Activated T-helper 1 cell treated with anti-CD3 and anti-CD28 coated beads, Interleukin-12 subunit alpha, Interleukin-12 subunit beta, Interleukin-2, Interleukin-4 antibody, amounts not matched to agents 30 ng/mL and 10 ng/mL and 1 ng/mL, durations not matched to agents 14 hours and 24 hours and 36 hours (primary cell): ENCODE measurements at regions of chr6 and their contacts with region 1.

Region 1: GRCh38 chr6:111210194-111210728 is 123.0 kb downstream of the SLC16A10 start:
- DNase-seq: no peak
- H3K4me3 Mint-ChIP-seq: no peak overlapping the region
- H3K27ac Mint-ChIP-seq: no peak overlapping the region
- H3K4me1 Mint-ChIP-seq: no peaks in the 10 kb centered on the region
- H3K27me3 Mint-ChIP-seq: peaks cover 4% of the 10 kb centered on the region

Region 2: GRCh38 chr6:110528101-110528929 is 681.9 kb before region 1 on chr6:
- intact Hi-C with region 1: loop called (anchors 1 kb)
- DNase-seq: peak; percentile 24
- H3K4me3 Mint-ChIP-seq: no peak overlapping the region
- H3K27ac Mint-ChIP-seq: no peak overlapping the region
- H3K4me1 Mint-ChIP-seq: peaks cover 9% of the 10 kb centered on the region
- H3K27me3 Mint-ChIP-seq: peaks cover 8% of the 10 kb centered on the region

Region 3: DNA sequence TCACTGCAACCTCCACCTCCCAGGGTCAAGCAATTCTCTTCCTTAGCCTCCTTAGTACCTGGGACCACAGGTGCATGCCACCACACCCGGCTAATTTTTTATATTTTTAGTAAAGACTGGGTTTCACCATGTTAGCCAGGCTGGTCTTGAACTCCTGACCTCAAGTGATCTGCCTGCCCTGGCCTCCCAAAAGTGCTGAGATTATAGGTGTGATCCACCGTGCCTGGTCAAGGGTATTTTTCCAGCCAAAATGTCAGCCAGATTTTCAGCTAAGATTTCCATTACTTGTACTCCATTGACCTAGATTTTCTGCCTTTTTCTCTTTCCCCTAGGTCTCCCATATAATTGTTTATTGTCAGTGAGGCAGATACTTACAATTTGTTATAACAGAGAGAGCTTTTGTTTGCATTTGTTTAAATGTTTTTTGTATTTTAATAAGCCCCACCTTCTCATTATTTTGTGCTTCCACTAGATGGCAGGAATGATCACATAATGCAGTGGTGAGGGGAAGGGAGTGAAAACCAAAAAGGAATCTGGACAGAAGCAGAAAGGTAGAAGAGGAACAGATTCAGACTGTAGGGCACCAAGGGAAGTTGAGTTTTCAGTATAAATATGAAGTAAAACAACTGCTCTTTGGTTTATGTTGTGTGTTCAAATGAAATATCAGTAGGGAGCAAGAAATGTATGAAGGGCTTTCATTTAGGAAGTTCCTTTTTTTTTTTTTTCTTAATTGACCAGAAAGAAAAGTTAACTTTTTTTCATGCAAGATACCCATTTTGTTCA is 198.7 kb before region 1 on chr6:
- intact Hi-C with region 1: loop called (anchors 1 kb)
- DNase-seq: no peak
- H3K4me3 Mint-ChIP-seq: no peak overlapping the region
- H3K27ac Mint-ChIP-seq: no peak overlapping the region
- H3K4me1 Mint-ChIP-seq: peaks cover 6% of the 10 kb centered on the region
- H3K27me3 Mint-ChIP-seq: no peaks in the 10 kb centered on the region

Region 4: GRCh38 chr6:111057074-111057752 is 153.0 kb before region 1 on chr6:
- intact Hi-C with region 1: loop called (anchors 1 kb)
- DNase-seq: no peak
- H3K4me3 Mint-ChIP-seq: no peak overlapping the region
- H3K27ac Mint-ChIP-seq: no peak overlapping the region
- H3K4me1 Mint-ChIP-seq: no peaks in the 10 kb centered on the region
- H3K27me3 Mint-ChIP-seq: peaks cover 3% of the 10 kb centered on the region

Region 5: DNA sequence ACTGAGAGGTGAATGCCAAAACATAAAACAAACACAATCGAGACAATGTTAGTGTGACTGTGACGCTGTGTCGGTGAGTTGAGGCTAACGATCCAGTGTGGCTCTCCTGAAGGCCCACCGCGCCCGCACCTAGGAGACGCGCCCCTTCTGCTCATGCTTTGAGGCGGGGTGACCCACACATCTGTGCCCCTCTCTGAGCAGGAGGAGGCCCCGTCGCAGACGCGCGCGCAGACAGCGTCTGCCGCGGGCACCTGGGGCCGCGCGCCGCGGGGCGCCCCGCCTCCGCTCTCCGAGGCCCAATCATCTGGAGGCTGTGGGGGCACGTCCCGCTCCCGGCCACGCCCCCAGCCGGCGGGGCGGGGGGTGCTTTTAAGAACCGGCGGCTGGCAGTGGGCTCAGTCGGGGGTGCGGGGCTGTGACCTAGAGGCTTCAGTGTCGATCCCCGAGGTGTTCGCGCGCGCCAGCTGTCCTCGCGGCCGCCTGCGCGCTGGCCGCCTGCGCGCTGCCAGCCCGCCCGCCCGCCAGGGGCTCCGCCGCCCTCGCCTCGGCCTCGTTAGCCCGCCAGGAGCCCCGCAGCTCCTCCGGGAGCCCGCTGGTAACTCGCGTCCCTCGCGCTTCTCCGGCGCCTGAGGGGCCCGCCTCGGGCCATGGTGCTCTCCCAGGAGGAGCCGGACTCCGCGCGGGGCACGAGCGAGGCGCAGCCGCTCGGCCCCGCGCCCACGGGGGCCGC is 123.0 kb before region 1 on chr6 and contains the start of gene SLC16A10:
- intact Hi-C with region 1: loop called (anchors 1 kb)
- DNase-seq: peak; percentile 66
- H3K4me3 Mint-ChIP-seq: peak within 1 kb of the TSS; percentile 88
- H3K27ac Mint-ChIP-seq: peak within 1 kb of the TSS; percentile 18
- H3K4me1 Mint-ChIP-seq: peaks cover 25% of the 10 kb centered on the region
- H3K27me3 Mint-ChIP-seq: peaks cover 14% of the 10 kb centered on the region
- total RNA-seq, gene SLC16A10: 2.8 and 3.2 TPM in 2 replicates

Region 6: GRCh38 chr6:111478749-111479148 is 268.5 kb after region 1 on chr6:
- intact Hi-C with region 1: loop called (anchors 1 kb)
- DNase-seq: no peak
- H3K4me3 Mint-ChIP-seq: no peak overlapping the region
- H3K27ac Mint-ChIP-seq: no peak overlapping the region
- H3K4me1 Mint-ChIP-seq: peaks cover 37% of the 10 kb centered on the region
- H3K27me3 Mint-ChIP-seq: no peaks in the 10 kb centered on the region